ENCODE measurements at regions of chr15 and their contacts with region 1.

Region 1: GRCh38 chr15:44882499-44882968 is 74.0 kb upstream of the TERB2 start:
- DNase-seq: no peak
- H3K4me3 ChIP-seq: no peak overlapping the region
- H3K27ac ChIP-seq: no peak overlapping the region
- H3K4me1 ChIP-seq: peaks cover 14% of the 10 kb centered on the region; the same call in 1 of the 2 replicates
- H3K27me3 ChIP-seq: no peaks in the 10 kb centered on the region
- CTCF ChIP-seq: no peak

Region 2: DNA sequence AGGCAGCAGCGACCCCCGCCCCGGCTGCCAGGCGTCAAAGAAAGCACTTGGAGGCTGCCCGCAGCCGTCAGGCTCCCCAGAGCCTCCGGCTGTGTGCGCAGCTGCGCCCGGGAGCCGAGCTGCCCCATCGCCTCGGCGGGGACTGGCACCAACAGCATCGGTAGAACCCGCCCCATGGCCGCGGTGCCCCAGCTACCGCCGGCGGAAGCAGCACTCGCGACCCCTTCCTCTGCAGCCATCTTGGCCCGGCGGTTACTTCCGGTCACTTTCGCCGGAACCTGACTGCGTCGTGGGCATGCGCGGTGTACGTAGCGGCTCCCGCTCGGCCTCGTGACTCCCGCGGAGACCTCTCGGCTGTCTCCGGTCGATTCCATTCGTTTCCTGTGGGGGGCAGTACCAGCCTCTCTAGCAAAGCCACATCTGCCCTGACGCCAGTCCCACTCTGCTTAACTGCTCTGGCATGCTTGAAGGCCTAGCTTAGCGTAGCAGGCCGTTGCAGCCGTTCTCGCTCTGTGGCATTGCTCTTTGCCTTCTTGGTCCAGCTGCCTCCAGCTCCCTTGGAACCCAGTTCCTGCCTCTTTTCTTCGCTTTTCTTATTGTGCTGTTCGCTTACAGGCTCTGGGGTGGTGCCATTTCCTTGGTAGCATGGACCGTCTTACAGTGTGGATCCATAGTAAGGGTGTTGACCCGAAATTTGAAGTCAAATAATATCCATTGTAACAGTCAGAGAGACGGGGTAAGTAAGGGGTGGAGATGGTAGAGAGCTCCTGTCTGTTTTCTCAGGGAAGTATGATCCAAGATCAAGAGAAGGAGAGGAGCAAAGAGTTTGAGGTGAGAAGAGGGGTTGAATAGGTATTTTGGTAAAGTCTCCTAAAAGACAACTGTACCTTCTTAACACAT is 218.9 kb before region 1 on chr15 and contains the start of gene SPG11:
- CTCF ChIA-PET with region 1: no interaction called
- POLR2A ChIA-PET with region 1: no interaction called
- intact Hi-C with region 1: no loop called
- DNase-seq: peak; percentile 87 to 96
- H3K4me3 ChIP-seq: peak within 1 kb of the TSS; percentile 75
- H3K27ac ChIP-seq: peak within 1 kb of the TSS; percentile 78
- H3K4me1 ChIP-seq: peaks cover 13% of the 10 kb centered on the region
- H3K27me3 ChIP-seq: no peaks in the 10 kb centered on the region
- CTCF ChIP-seq: peak; percentile 80
- total RNA-seq, gene SPG11: 63.2 and 64.2 TPM in 2 replicates

Region 3: DNA sequence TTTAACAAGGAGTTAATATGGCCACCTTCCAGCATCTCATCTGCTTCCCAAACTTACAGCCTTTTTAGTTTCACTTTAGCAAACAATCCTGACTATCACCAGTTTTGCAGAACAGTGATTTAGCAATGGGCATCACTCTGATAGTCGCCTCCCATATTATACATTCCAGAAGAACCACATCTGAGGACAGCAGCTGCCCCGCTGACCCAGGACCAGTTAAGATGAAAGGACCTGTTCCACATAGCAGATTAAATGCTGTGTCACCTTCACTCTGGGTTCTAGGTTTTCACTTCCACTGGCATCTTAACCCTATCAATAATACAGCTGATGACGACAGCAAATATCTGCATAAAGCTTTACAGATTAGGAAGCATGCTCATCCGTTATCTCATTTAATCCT is 46.4 kb before region 1 on chr15:
- CTCF ChIA-PET with region 1: no interaction called
- POLR2A ChIA-PET with region 1: no interaction called
- intact Hi-C with region 1: no loop called
- DNase-seq: peak; percentile 62 to 67
- H3K4me3 ChIP-seq: no peak overlapping the region
- H3K27ac ChIP-seq: 0 out of 2 replicates have a peak overlapping the region, but pooled peaks have one; percentile 16
- H3K4me1 ChIP-seq: peaks cover 3% of the 10 kb centered on the region; the same call in 1 of the 2 replicates
- H3K27me3 ChIP-seq: no peaks in the 10 kb centered on the region
- CTCF ChIP-seq: no peak

Region 4: GRCh38 chr15:45333550-45333949 is 451.0 kb after region 1 on chr15:
- CTCF ChIA-PET with region 1: no interaction called
- POLR2A ChIA-PET with region 1: no interaction called
- intact Hi-C with region 1: loop called (anchors 5 kb)
- DNase-seq: no peak
- H3K4me3 ChIP-seq: no peak overlapping the region
- H3K27ac ChIP-seq: no peak overlapping the region
- H3K4me1 ChIP-seq: no peaks in the 10 kb centered on the region
- H3K27me3 ChIP-seq: no peaks in the 10 kb centered on the region
- CTCF ChIP-seq: no peak

Measured in PC-9 (cell line).